Activated CD8-positive, alpha-beta memory T cell treated with anti-CD3 and anti-CD28 coated beads, Interleukin-2, amount 10 ng/mL, durations not matched to agents 7 days and 5 days (primary cell): ENCODE measurements at regions of chr5 and their contacts with region 1.

Region 1: GRCh38 chr5:160439205-160439600 is 17.5 kb downstream of the PTTG1 start:
- DNase-seq: peak; percentile 94
- ATAC-seq: peak; percentile 85
- H3K4me3 Mint-ChIP-seq: peak overlapping the region; percentile 87
- H3K27ac Mint-ChIP-seq: peak overlapping the region; percentile 92
- H3K4me1 Mint-ChIP-seq: peaks cover 44% of the 10 kb centered on the region
- H3K27me3 Mint-ChIP-seq: peaks cover 4% of the 10 kb centered on the region

Region 2: GRCh38 chr5:160298189-160298588 is 141.0 kb before region 1 on chr5:
- CTCF ChIA-PET with region 1: no interaction called
- DNase-seq: no peak
- ATAC-seq: no peak
- H3K4me3 Mint-ChIP-seq: no peak overlapping the region
- H3K27ac Mint-ChIP-seq: no peak overlapping the region
- H3K4me1 Mint-ChIP-seq: no peaks in the 10 kb centered on the region
- H3K27me3 Mint-ChIP-seq: peaks cover 9% of the 10 kb centered on the region

Region 3: GRCh38 chr5:160399402-160400353 is 39.5 kb before region 1 on chr5 and contains the start of gene FAM200C:
- CTCF ChIA-PET with region 1: interaction called, 13 read pairs
- DNase-seq: peak; percentile 82
- ATAC-seq: peak; percentile 91
- H3K4me3 Mint-ChIP-seq: peak within 1 kb of the TSS; percentile 85
- H3K27ac Mint-ChIP-seq: peak within 1 kb of the TSS; percentile 70
- H3K4me1 Mint-ChIP-seq: peaks cover 17% of the 10 kb centered on the region
- H3K27me3 Mint-ChIP-seq: no peaks in the 10 kb centered on the region
- total RNA-seq, gene FAM200C: 0.61 to 0.88 TPM

Region 4: GRCh38 chr5:160450164-160450932 is 11.1 kb after region 1 on chr5:
- CTCF ChIA-PET with region 1: interaction called, 19 read pairs
- DNase-seq: no peak
- ATAC-seq: no peak
- H3K4me3 Mint-ChIP-seq: no peak overlapping the region
- H3K27ac Mint-ChIP-seq: peak overlapping the region; percentile 28
- H3K4me1 Mint-ChIP-seq: peaks cover 9% of the 10 kb centered on the region
- H3K27me3 Mint-ChIP-seq: peaks cover 7% of the 10 kb centered on the region

Region 5: GRCh38 chr5:160467555-160468362 is 28.6 kb after region 1 on chr5:
- CTCF ChIA-PET with region 1: interaction called, 172 read pairs
- DNase-seq: peak; percentile 95
- ATAC-seq: peak; percentile 86
- H3K4me3 Mint-ChIP-seq: peak overlapping the region; percentile 97
- H3K27ac Mint-ChIP-seq: peak overlapping the region; percentile 99
- H3K4me1 Mint-ChIP-seq: peaks cover 73% of the 10 kb centered on the region
- H3K27me3 Mint-ChIP-seq: no peaks in the 10 kb centered on the region

Region 6: GRCh38 chr5:160486573-160486972 is 47.4 kb after region 1 on chr5:
- CTCF ChIA-PET with region 1: interaction called, 33 read pairs
- DNase-seq: peak; percentile 92
- ATAC-seq: peak; percentile 98
- H3K4me3 Mint-ChIP-seq: peak overlapping the region; percentile 33
- H3K27ac Mint-ChIP-seq: peak overlapping the region; percentile 85
- H3K4me1 Mint-ChIP-seq: peaks cover 70% of the 10 kb centered on the region
- H3K27me3 Mint-ChIP-seq: no peaks in the 10 kb centered on the region

Region 7: GRCh38 chr5:160508780-160509361 is 69.7 kb after region 1 on chr5:
- CTCF ChIA-PET with region 1: interaction called, 106 read pairs
- DNase-seq: peak; percentile 82
- ATAC-seq: peak; percentile 78
- H3K4me3 Mint-ChIP-seq: no peak overlapping the region
- H3K27ac Mint-ChIP-seq: peak overlapping the region; percentile 67
- H3K4me1 Mint-ChIP-seq: peaks cover 38% of the 10 kb centered on the region
- H3K27me3 Mint-ChIP-seq: peaks cover 7% of the 10 kb centered on the region